Activated naive CD4-positive, alpha-beta T cell treated with anti-CD3 and anti-CD28 coated beads for 36 hours (primary cell): ENCODE measurements at regions of chr7 and their contacts with region 1.

Region 1: DNA sequence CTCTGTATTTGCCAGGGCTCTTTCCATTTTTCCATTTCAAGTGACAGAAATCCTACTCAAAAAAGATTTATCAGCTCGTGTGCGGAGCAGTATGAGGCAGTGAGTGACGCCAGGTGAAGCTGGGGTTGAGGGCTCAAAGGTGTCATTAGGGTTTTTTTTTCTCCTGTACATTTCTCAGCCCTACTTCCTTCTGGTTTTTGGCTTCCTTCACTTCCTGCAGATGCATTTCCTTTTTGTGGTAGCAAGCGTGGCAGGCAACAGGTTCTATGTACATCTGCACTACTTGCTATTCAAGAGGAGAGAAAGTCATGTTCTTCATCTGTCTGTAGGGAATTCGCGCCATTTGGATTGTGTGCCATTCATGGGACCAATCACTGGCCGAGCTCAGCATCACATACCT is 52.8 kb upstream of the AOAH start:
- DNase-seq: peak; percentile 46
- H3K4me3 Mint-ChIP-seq: peak overlapping the region; percentile 48
- H3K27ac Mint-ChIP-seq: no peak overlapping the region
- H3K4me1 Mint-ChIP-seq: peaks cover 68% of the 10 kb centered on the region
- H3K27me3 Mint-ChIP-seq: no peaks in the 10 kb centered on the region

Region 2: GRCh38 chr7:36280840-36281812 is 495.9 kb before region 1 on chr7:
- CTCF ChIA-PET with region 1: no interaction called
- intact Hi-C with region 1: no loop called
- DNase-seq: no peak
- H3K4me3 Mint-ChIP-seq: no peak overlapping the region
- H3K27ac Mint-ChIP-seq: no peak overlapping the region
- H3K4me1 Mint-ChIP-seq: peaks cover 15% of the 10 kb centered on the region
- H3K27me3 Mint-ChIP-seq: no peaks in the 10 kb centered on the region

Region 3: GRCh38 chr7:36736899-36737211 is 40.2 kb before region 1 on chr7:
- CTCF ChIA-PET with region 1: no interaction called
- intact Hi-C with region 1: loop called (anchors 5 kb)
- DNase-seq: no peak
- H3K4me3 Mint-ChIP-seq: no peak overlapping the region
- H3K27ac Mint-ChIP-seq: no peak overlapping the region
- H3K4me1 Mint-ChIP-seq: peaks cover 27% of the 10 kb centered on the region
- H3K27me3 Mint-ChIP-seq: no peaks in the 10 kb centered on the region

Region 4: GRCh38 chr7:36749282-36749960 is 27.6 kb before region 1 on chr7:
- CTCF ChIA-PET with region 1: no interaction called
- intact Hi-C with region 1: no loop called
- DNase-seq: no peak
- H3K4me3 Mint-ChIP-seq: no peak overlapping the region
- H3K27ac Mint-ChIP-seq: no peak overlapping the region
- H3K4me1 Mint-ChIP-seq: peaks cover 15% of the 10 kb centered on the region
- H3K27me3 Mint-ChIP-seq: no peaks in the 10 kb centered on the region

Region 5: DNA sequence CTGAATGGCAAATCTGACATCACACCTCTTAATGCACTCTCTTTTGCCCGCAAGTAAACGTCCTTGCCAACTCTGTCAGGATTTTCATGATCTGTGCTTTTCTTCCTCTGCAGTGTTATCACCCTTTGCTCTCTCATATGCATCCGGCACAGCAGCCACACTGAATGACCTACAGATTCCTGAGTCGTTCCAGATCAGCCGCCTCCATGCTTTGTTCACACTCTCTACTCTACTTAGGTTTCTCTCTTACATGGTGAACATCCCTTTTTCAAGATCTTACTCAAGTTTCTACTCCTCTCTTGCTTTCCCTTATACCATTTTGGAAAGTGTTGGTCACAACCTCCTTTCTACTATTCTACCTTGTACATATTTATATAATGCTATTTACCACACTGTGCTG is 75.0 kb after region 1 on chr7:
- CTCF ChIA-PET with region 1: no interaction called
- intact Hi-C with region 1: loop called (anchors 2 kb)
- DNase-seq: peak; percentile 18
- H3K4me3 Mint-ChIP-seq: no peak overlapping the region
- H3K27ac Mint-ChIP-seq: peak overlapping the region; percentile 54
- H3K4me1 Mint-ChIP-seq: peaks cover 17% of the 10 kb centered on the region
- H3K27me3 Mint-ChIP-seq: no peaks in the 10 kb centered on the region